GM12878 (cell line): ENCODE measurements at regions of chr12 and their contacts with region 1.

Region 1: GRCh38 chr12:125402874-125403789 is 337.9 kb downstream of the AACS start:
- DNase-seq: no peak
- ATAC-seq: peak; percentile 62
- H3K4me3 ChIP-seq: no peak overlapping the region
- H3K27ac ChIP-seq: no peak overlapping the region
- H3K4me1 ChIP-seq: peaks cover 14% of the 10 kb centered on the region
- H3K27me3 ChIP-seq: peaks cover 0 to 6% of the 10 kb centered on the region in 2 experiments; a peak in 2 of 4 replicates
- CTCF ChIP-seq: peak; percentile 46 to 62 (median 55); a peak in 5 of 6 replicates
- EP300 ChIP-seq: no peak
- POLR2A ChIP-seq: no peak
- RAD21 ChIP-seq: peak; percentile 75

Region 2: DNA sequence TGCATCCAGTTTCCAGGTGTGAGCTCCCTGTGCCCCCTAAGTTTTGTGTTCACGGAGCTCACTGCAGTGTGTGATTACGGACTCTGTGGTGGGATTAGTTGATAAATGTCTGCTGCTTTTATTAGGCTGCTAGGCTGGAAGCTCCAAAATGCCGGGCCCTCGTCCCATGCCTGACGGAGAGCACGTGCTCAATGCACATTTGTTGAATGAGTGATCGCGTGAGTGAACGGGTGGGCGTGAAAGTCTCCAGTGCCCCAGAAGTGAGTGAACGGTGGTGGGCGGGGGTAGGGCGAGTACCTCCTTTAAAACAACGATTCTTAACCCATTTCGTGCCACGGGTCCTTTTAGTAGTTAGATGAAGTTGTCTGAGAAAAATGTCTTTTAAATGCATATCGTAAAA is 162.4 kb before region 1 on chr12:
- CTCF ChIA-PET with region 1: interaction called, 10 read pairs
- POLR2A ChIA-PET with region 1: no interaction called
- RAD21 ChIA-PET with region 1: interaction called, 8 read pairs
- SMC1A ChIA-PET with region 1: interaction called, 3 read pairs
- in situ Hi-C with region 1: no loop called
- intact Hi-C with region 1: loop called (anchors 1 kb)
- DNase-seq: no peak
- ATAC-seq: no peak
- H3K4me3 ChIP-seq: no peak overlapping the region
- H3K27ac ChIP-seq: no peak overlapping the region
- H3K4me1 ChIP-seq: no peaks in the 10 kb centered on the region
- H3K27me3 ChIP-seq: peaks cover under 1 to 2% of the 10 kb centered on the region in 2 experiments; a peak in 3 of 4 replicates
- CTCF ChIP-seq: no peak
- EP300 ChIP-seq: no peak
- POLR2A ChIP-seq: no peak
- RAD21 ChIP-seq: no peak

Region 3: DNA sequence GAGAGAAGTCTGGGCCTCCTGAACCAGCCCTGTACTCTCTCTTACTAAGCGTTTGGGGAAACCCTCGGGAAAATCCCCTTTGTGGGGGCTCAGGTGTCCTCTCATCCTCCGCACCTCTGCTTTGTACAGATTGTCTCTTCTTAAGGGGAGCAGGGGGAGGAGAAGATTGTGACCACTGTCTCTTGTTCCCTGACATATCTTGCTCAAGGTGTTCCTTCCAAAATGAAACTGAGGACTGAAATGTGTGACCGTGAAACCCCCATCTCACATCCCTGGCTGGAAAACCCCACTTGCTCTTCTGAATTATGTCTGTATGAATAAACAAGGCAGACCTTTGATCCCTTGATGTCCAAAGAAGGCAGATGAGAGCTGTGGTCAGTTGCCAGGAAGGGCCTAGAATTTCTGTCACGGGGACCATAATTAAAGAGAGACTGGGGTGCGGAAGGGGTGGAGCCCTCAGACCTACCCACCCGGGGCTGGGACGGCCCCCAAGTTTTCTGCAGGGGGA is 31.9 kb after region 1 on chr12:
- CTCF ChIA-PET with region 1: no interaction called
- POLR2A ChIA-PET with region 1: no interaction called
- RAD21 ChIA-PET with region 1: no interaction called
- SMC1A ChIA-PET with region 1: interaction called, 14 read pairs
- in situ Hi-C with region 1: no loop called
- intact Hi-C with region 1: loop called (anchors 1 kb)
- DNase-seq: peak; percentile 82
- ATAC-seq: peak; percentile 92
- H3K4me3 ChIP-seq: no peak overlapping the region
- H3K27ac ChIP-seq: peak overlapping the region; percentile 17; the same call in 1 of the 2 replicates
- H3K4me1 ChIP-seq: peaks cover 11% of the 10 kb centered on the region
- H3K27me3 ChIP-seq: no peaks in the 10 kb centered on the region
- CTCF ChIP-seq: no peak
- EP300 ChIP-seq: peak; percentile 73 to 90; a peak in 3 of 4 replicates
- POLR2A ChIP-seq: no peak
- RAD21 ChIP-seq: no peak

Region 4: GRCh38 chr12:125440399-125440798 is 37.3 kb after region 1 on chr12:
- CTCF ChIA-PET with region 1: interaction called, 3 read pairs
- POLR2A ChIA-PET with region 1: no interaction called
- RAD21 ChIA-PET with region 1: no interaction called
- SMC1A ChIA-PET with region 1: interaction called, 14 read pairs
- in situ Hi-C with region 1: no loop called
- intact Hi-C with region 1: loop called (anchors 1 kb)
- DNase-seq: no peak
- ATAC-seq: no peak
- H3K4me3 ChIP-seq: no peak overlapping the region
- H3K27ac ChIP-seq: no peak overlapping the region
- H3K4me1 ChIP-seq: peaks cover 4% of the 10 kb centered on the region
- H3K27me3 ChIP-seq: no peaks in the 10 kb centered on the region
- CTCF ChIP-seq: no peak
- EP300 ChIP-seq: no peak
- POLR2A ChIP-seq: no peak
- RAD21 ChIP-seq: no peak